A549 (cell line): ENCODE measurements at regions of chr2 and their contacts with region 1.

Region 1: DNA sequence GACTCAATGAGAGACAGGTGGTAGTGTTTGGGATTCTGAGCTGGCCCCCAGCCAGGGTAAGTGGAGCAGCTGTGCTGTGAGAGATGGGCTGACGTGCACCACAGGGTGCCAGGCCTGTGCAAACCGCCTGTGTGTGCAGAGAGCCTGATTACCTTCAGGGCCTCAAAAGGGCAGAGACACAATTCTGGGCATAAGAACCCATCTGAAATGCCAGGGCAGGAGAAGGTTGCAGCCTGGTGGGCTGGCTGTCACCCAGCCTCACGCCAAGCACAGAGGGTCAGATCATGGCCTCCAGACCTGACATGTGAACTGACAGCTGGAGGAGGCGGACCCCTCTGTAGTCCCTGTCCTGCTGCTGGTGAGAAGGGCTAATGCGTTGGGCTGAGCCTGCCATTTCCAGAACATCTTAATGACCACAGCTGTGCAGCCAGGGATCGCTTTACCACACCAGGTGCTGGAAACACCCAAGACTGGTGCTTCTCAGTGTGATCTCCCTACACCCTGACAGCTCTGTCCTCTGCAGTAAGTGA is 100.9 kb downstream of the ARL4C start:
- DNase-seq: no peak
- ATAC-seq: no peak
- H3K4me3 ChIP-seq: no peak overlapping the region
- H3K27ac ChIP-seq: peak overlapping the region in 1 of 2 experiments; percentile 51; a peak in 3 of 6 replicates
- H3K4me1 ChIP-seq: no peaks in the 10 kb centered on the region
- CTCF ChIP-seq: no peak
- EP300 ChIP-seq: no peak
- POLR2A ChIP-seq: no peak
- RAD21 ChIP-seq: no peak

Region 2: DNA sequence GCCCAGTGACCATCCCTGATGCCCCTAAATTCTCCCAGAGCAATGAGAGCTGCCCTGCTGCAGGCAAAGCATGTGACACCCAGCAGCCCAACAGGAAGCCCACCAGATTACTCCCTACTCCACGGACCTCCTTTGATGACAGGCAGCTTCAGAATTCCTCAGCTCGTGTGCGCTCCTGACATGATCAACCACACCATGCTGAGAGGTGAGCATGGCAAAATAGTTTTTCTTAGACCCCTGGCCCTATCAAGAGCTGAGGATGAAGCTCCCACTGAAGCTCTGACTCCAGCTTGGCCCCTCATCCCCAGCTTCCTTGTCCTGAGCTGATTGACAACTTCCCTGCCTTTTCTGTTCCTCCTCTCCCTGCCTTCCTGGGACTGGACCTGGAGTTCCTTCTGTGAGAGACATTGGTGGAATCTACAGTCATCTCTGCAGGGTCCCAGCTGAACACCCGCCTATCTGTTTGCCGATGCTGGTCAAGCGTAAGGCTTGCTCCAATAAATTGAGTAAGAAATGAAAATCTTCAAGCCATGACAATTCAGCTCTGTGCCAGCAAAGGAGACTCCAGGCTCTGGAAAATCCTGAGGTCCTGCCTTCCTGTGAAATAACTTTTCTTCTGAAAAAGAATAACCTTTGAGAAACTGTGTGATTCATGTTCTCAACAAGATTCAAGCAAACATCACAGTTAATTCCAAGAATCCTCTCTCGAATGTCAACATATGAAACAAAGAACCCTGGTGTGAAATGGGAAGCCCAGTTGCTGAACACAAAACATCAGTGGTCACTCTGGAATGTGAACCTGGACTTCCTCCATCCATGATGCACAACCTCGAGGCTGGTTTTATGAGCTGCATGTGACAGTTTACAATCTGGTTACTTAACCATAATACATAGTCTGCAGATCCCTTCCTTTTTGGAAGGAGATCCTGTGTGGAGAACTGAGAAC is 144.4 kb before region 1 on chr2:
- CTCF ChIA-PET with region 1: no interaction called
- POLR2A ChIA-PET with region 1: no interaction called
- DNase-seq: peak; percentile 56 to 91
- ATAC-seq: peak; percentile 66 to 70
- H3K4me3 ChIP-seq: no peak overlapping the region
- H3K27ac ChIP-seq: peak overlapping the region; percentile 93 to 95
- H3K4me1 ChIP-seq: peaks cover 74% of the 10 kb centered on the region
- CTCF ChIP-seq: no peak
- EP300 ChIP-seq: peak; percentile 85 to 86; a peak in 3 of 5 replicates
- POLR2A ChIP-seq: no peak
- RAD21 ChIP-seq: peak; percentile 28 to 55; a peak in 3 of 5 replicates

Region 3: GRCh38 chr2:234374736-234375135 is 21.2 kb before region 1 on chr2:
- CTCF ChIA-PET with region 1: interaction called, 11 read pairs
- POLR2A ChIA-PET with region 1: no interaction called
- DNase-seq: no peak
- ATAC-seq: no peak; a peak in 2 of 6 replicates
- H3K4me3 ChIP-seq: no peak overlapping the region
- H3K27ac ChIP-seq: peak overlapping the region; percentile 19 to 76; a peak in 4 of 6 replicates
- H3K4me1 ChIP-seq: peaks cover 62% of the 10 kb centered on the region
- CTCF ChIP-seq: no peak
- EP300 ChIP-seq: no peak
- POLR2A ChIP-seq: no peak
- RAD21 ChIP-seq: no peak

Region 4: GRCh38 chr2:234620018-234620417 is 224.1 kb after region 1 on chr2:
- CTCF ChIA-PET with region 1: no interaction called
- POLR2A ChIA-PET with region 1: no interaction called
- DNase-seq: no peak
- ATAC-seq: no peak
- H3K4me3 ChIP-seq: no peak overlapping the region
- H3K27ac ChIP-seq: no peak overlapping the region
- H3K4me1 ChIP-seq: no peaks in the 10 kb centered on the region
- CTCF ChIP-seq: no peak
- EP300 ChIP-seq: no peak
- POLR2A ChIP-seq: no peak
- RAD21 ChIP-seq: no peak